ENCODE measurements at regions of chr6 and their contacts with region 1.

Region 1: GRCh38 chr6:37705239-37706051 is 7.8 kb upstream of the MDGA1 start:
- DNase-seq: peak; percentile 74 to 78 (median 75)
- ATAC-seq: peak; percentile 78
- H3K4me3 ChIP-seq: no peak overlapping the region
- H3K4me1 ChIP-seq: peaks cover 6% of the 10 kb centered on the region
- CTCF ChIP-seq: no peak

Region 2: GRCh38 chr6:36615018-36615761 is 1090.3 kb before region 1 on chr6:
- intact Hi-C with region 1: no loop called
- DNase-seq: peak in 2 of 3 donors; percentile 26 to 43
- ATAC-seq: peak; percentile 63
- H3K4me3 ChIP-seq: no peak overlapping the region
- H3K4me1 ChIP-seq: peaks cover 15% of the 10 kb centered on the region
- CTCF ChIP-seq: peak; percentile 25

Region 3: GRCh38 chr6:37830225-37830624 is 124.8 kb after region 1 on chr6:
- intact Hi-C with region 1: no loop called
- DNase-seq: no peak
- ATAC-seq: no peak
- H3K4me3 ChIP-seq: no peak overlapping the region
- H3K4me1 ChIP-seq: peaks cover 17% of the 10 kb centered on the region
- CTCF ChIP-seq: no peak

Region 4: DNA sequence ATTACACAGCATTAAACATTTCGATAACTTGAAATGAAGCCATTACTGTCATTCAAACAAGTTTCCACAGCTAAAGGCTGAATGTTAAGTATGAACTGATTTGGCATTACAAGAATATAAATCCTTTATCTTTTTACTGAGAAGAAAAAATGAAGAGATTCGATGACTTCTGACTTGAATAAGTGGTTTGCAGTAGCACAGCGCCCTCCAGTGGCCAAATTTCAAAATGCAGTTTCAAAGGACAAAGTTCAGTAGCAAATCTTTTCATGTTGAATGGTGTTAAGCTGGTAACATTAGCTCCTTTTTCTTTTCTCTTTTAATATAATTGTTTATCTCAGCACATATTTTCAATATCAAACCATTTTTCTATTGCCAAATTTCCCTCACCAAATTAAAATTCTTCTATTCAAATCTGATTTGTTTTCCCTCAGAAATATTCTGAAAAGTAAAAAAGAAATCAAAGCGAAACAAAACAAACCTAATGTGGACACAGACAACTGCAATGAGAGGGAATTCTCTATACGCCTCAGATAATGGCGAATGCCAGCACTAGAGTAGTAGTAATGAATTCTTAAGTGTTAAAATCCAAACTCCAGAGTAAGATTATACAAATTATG is 788.6 kb after region 1 on chr6:
- intact Hi-C with region 1: loop called in 1 of 2 experiments (anchors 10 kb)
- DNase-seq: peak in 2 of 3 donors; percentile 46 to 91
- ATAC-seq: peak; percentile 71
- H3K4me3 ChIP-seq: no peak overlapping the region
- H3K4me1 ChIP-seq: no peaks in the 10 kb centered on the region
- CTCF ChIP-seq: peak; percentile 86

Measured in mucosa of descending colon (tissue), 3 donors.